ENCODE measurements at regions of chr17 and their contacts with region 1.

Region 1: DNA sequence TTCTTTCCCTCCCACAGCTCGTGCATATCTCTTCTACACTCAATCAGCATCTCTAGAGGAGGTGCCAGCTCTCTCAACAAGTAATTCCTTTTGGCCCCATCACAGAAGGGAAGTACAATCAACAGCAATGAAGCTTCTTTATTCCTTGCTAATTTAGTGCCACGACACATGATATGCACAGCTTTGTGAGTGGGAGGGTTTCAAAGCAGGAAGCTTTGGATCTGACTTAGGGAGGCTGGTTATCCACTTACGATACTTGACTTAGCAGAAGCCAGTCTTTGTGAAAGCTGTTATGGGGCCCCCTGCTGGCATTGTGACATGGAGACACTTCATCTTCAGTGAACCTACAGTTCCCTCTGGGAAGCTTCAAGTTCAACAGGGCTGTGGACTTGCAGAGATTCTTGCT is 81.0 kb downstream of the TMEM100 start:
- DNase-seq: peak; percentile 48
- H3K4me3 ChIP-seq: no peak overlapping the region
- H3K27ac ChIP-seq: no peak overlapping the region
- H3K27me3 ChIP-seq: peaks cover 5% of the 10 kb centered on the region
- CTCF ChIP-seq: peak; percentile 80

Region 2: DNA sequence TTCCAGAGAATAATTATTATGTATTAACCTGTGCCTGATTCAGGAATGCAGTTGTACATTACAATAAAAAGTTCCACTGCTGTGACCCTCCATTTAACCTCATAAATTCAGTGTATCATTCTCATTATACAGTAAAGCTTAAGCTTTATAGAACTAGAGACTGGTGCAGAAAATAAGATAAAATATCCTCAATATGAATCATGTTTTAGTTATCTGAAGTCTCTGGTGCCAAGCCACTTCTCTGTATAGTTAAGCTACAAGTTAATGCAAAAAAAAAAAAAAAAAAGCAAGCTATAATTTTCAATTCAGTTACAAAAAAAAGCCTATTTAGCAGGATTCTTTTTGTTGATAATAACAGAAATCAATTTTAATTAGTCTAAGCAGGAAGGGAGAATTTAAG is 108.1 kb before region 1 on chr17:
- CTCF ChIA-PET with region 1: interaction called, 183 read pairs
- POLR2A ChIA-PET with region 1: no interaction called
- DNase-seq: no peak
- H3K4me3 ChIP-seq: no peak overlapping the region
- H3K27ac ChIP-seq: no peak overlapping the region
- H3K27me3 ChIP-seq: no peaks in the 10 kb centered on the region
- CTCF ChIP-seq: no peak

Region 3: DNA sequence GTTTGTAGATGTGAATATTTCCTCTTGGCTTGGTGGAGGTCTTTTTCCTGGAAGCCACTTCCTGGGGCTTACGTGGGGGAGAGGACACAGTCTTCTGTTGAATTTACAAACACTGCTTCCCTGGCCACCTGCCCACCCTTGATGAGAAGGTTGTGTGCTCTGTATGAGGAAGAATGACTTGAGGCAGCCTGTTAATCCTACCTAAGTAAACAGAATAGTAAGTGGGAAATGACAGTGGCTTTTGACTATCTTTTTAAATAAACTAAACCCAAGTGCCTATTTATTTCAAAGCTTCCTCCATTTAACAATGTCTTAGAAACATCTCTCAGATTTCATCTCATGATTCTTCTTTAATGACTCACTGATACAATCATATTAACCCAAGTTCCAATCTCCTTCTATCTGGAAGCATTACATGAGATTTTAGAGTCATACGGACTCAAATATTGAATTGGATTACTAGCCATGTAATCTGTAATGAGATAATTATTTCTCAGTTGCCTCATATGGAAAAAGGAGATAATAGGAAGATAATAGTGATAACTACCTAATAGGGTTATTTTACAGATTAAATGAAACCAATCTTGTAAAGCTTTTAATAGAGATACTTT is 33.8 kb before region 1 on chr17:
- CTCF ChIA-PET with region 1: interaction called, 67 read pairs
- POLR2A ChIA-PET with region 1: no interaction called
- DNase-seq: peak; percentile 57
- H3K4me3 ChIP-seq: no peak overlapping the region
- H3K27ac ChIP-seq: no peak overlapping the region
- H3K27me3 ChIP-seq: no peaks in the 10 kb centered on the region
- CTCF ChIP-seq: no peak

Region 4: GRCh38 chr17:55625521-55625920 is 16.2 kb before region 1 on chr17:
- CTCF ChIA-PET with region 1: interaction called, 17 read pairs
- POLR2A ChIA-PET with region 1: no interaction called
- DNase-seq: no peak
- H3K4me3 ChIP-seq: no peak overlapping the region
- H3K27ac ChIP-seq: no peak overlapping the region
- H3K27me3 ChIP-seq: peaks cover 3% of the 10 kb centered on the region
- CTCF ChIP-seq: no peak

Region 5: GRCh38 chr17:55735731-55736405 is 94.2 kb after region 1 on chr17:
- CTCF ChIA-PET with region 1: interaction called, 17 read pairs
- POLR2A ChIA-PET with region 1: no interaction called
- DNase-seq: no peak
- H3K4me3 ChIP-seq: no peak overlapping the region
- H3K27ac ChIP-seq: no peak overlapping the region
- H3K27me3 ChIP-seq: no peaks in the 10 kb centered on the region
- CTCF ChIP-seq: peak; percentile 79

Measured in AG04450 (cell line).